ENCODE measurements at regions of chr13 and their contacts with region 1.

Region 1: GRCh38 chr13:48580185-48580803 is 47.4 kb upstream of the RCBTB2 start:
- DNase-seq: peak; percentile 11
- H3K4me3 ChIP-seq: no peak overlapping the region
- H3K27ac ChIP-seq: no peak overlapping the region
- H3K27me3 ChIP-seq: peaks cover 12% of the 10 kb centered on the region
- CTCF ChIP-seq: peak; percentile 73

Region 2: GRCh38 chr13:47826471-47826870 is 753.8 kb before region 1 on chr13:
- CTCF ChIA-PET with region 1: no interaction called
- POLR2A ChIA-PET with region 1: no interaction called
- DNase-seq: no peak
- H3K4me3 ChIP-seq: no peak overlapping the region
- H3K27ac ChIP-seq: no peak overlapping the region
- H3K27me3 ChIP-seq: peaks cover 2% of the 10 kb centered on the region
- CTCF ChIP-seq: no peak

Region 3: DNA sequence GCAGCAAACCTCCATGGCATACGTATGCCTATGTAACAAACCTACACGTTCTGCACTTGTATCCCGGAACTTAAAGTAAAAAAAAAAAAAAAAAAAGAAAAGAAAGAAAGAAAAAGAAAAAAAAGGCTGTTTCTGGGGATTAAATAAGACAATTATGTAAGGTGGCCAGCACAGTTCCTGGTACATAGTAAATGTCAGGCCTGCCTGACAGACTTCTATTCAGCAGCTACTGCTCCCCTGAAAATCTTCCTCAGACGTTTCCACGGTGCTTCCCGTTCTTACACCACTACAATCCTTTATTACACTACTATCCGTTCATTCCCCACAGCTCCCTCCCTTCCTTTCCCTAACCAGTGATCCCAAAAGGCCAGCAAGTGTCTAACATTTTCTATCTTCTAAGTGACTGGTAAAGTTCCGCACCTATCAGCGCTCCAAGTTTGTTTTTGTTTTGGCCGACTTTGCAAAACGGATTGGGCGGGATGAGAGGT is 277.4 kb before region 1 on chr13:
- CTCF ChIA-PET with region 1: interaction called, 11 read pairs
- POLR2A ChIA-PET with region 1: no interaction called
- DNase-seq: peak; percentile 1
- H3K4me3 ChIP-seq: peak overlapping the region; percentile 62
- H3K27ac ChIP-seq: peak overlapping the region; percentile 99
- H3K27me3 ChIP-seq: no peaks in the 10 kb centered on the region
- CTCF ChIP-seq: no peak

Region 4: GRCh38 chr13:48356750-48357149 is 223.5 kb before region 1 on chr13:
- CTCF ChIA-PET with region 1: interaction called, 11 read pairs
- POLR2A ChIA-PET with region 1: no interaction called
- DNase-seq: no peak
- H3K4me3 ChIP-seq: no peak overlapping the region
- H3K27ac ChIP-seq: no peak overlapping the region
- H3K27me3 ChIP-seq: no peaks in the 10 kb centered on the region
- CTCF ChIP-seq: no peak

Region 5: DNA sequence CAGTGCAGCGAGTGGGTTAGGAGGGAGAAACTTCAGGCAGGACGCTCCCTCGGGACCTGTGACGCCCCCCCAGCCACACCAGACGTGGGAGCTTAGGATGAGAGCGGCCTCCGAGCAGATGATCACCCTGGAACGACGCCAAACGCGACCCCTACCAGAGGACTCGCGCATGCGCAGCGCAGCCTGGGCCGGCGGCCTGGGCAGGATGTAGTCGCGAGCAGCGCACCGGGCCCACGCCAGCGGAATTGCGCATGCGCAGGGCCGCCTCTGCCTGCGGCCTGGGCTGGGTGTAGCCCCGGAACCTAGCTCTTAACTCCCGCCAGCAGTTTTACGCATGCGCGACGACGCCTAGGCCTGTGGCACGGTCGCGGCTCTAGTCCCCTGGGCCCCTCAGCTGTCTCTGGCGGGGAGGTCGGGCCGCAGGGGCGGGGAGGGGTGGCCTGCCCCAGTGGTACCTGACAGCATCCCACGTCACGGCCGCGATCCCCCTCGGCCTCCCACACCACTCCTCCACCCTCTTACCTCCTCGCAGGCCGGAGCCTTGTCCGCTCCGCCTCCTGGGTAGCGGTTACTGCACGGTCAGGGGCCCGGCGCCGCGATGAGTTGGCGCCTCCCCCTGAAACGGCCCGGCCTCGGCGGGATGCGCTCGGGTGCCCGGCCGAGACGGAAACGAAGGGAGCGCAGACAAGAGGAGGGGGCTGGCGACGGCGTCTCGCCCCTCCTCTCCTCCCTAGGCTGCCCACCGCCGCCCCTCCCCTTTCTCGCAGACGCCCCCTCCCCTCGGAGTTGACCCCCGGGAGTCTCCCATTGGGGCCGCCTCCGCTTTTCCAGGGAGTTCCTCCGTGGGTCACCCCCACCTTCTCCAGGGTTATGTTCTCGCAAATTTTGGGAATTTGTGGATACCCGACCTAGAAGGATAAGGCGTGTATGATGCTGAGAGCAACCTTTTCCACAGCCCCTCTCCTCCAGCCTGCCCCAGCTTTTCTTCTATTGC is 47.5 kb before region 1 on chr13 and contains the start of gene RCBTB2:
- CTCF ChIA-PET with region 1: interaction called, 12 read pairs
- POLR2A ChIA-PET with region 1: interaction called, 5 read pairs
- DNase-seq: peak; percentile 92
- H3K4me3 ChIP-seq: peak within 1 kb of the TSS; percentile 84
- H3K27ac ChIP-seq: peak within 1 kb of the TSS; percentile 82
- H3K27me3 ChIP-seq: no peaks in the 10 kb centered on the region
- CTCF ChIP-seq: no peak
- polyA plus RNA-seq, gene RCBTB2: 8.6 and 10.9 TPM in 2 replicates

Region 6: DNA sequence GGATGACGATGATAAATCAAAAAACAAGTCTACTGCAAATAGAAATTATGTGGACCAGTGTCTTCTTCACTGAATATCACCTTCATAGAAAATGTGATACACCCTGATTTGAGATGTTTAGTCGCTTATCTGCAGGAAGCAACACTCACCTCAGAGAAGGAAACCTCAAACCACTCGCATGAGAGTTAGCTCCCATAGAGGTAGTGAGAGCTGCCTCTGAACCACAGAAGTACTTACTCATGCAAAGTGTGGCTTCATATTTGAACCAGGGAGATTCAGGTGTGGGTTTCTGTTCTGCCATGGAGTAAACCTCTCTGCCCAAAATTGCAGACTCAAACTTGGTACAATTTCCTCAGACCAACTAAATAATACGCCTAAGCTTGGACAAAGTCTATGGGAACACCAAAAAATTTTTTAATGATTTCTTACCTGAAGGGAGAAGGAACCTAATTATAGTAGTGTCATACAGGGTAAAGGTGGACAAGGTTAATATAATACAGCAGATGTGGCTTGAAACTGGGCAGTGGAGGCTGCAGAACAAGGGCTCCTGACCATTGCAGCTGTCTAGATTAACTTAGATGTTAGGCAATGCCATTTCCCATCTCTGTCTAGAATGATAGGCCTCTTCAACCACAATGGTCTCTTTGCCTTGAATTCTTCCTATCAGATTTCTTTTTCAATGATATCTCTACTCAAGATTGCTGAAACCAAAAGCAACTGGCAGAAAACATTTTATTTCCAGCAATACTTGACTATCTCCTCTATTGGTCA is 17.8 kb before region 1 on chr13:
- CTCF ChIA-PET with region 1: interaction called, 41 read pairs
- POLR2A ChIA-PET with region 1: no interaction called
- DNase-seq: no peak
- H3K4me3 ChIP-seq: no peak overlapping the region
- H3K27ac ChIP-seq: no peak overlapping the region
- H3K27me3 ChIP-seq: no peaks in the 10 kb centered on the region
- CTCF ChIP-seq: no peak

Region 7: DNA sequence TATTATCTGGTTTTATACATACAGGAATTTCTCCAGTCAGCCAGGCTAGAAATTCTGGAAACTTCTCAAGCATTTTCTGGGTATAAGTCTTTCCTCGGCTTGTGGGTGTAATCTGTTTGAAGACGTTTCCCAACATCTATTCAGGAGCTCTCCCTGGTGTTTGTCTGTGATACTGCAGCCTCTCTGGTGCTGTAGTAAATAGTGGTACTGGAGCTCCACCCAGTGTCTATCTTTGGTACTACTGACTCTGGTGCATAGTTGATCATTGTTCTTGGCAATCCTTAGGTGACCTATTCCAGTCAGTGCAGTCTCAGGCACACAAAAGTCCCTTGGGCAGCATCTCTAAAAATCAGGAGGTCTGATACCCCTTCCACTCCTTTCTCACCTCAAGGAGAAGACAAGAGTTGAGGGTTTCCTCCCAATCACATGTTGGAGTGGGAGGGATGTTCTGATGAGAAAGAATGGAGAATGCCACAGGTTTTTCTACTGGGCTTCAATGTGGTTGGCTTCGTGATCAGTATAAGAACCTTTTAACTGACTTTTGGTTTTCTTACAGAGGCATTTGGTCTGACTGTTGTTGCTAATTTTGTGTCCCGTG is 188.9 kb after region 1 on chr13:
- CTCF ChIA-PET with region 1: interaction called, 23 read pairs
- POLR2A ChIA-PET with region 1: no interaction called
- DNase-seq: peak; percentile 86
- H3K4me3 ChIP-seq: no peak overlapping the region
- H3K27ac ChIP-seq: no peak overlapping the region
- H3K27me3 ChIP-seq: no peaks in the 10 kb centered on the region
- CTCF ChIP-seq: peak; percentile 100

Measured in AG04450 (cell line).